ENCODE measurements at regions of chr12 and their contacts with region 1.

Region 1: DNA sequence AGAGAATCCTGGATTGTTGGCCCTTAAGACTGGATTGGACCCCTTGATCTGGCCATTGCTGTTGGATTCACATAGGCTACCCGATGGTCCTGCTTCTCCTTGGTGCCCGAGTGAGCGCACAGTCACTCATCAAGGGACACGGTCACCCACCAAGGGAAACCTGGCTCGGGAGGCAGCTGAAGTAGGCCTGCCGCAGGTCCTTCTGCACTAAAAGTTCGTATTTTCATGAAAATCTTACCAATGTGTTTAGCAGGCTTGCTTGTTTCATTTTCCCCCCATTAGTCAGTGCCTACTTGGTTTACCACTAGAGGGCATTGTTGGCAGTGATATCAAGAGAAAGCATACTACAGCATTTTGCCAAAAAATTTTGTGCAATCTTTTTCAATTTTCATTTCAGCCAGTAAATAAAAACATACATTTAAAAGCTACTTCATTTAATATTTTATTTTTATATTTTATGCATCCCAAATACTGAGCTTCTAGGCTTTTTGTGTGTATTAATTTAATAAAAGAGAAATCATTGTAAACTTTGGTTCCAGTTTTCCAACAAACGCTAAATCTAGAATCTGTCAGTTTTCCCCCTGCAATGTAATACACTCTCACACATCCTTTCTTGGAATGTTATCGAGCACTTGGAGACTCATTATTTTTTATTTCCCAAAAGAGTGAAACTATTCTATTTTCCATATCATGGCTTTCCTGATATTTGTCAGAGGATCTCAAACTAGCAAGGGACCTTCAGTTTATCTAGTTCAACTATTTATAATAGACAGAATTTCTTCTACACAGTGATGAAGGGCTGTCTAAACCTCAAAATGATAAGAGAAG is 116.7 kb downstream of the LMNTD1 start:
- DNase-seq: peak; percentile 64
- H3K4me3 ChIP-seq: peak overlapping the region in 1 of 2 experiments; percentile 48; a peak in 3 of 4 replicates
- H3K27ac ChIP-seq: peak overlapping the region; percentile 16 to 39; a peak in 2 of 4 replicates
- H3K4me1 ChIP-seq: peaks cover 19 to 25% of the 10 kb centered on the region in 2 experiments
- H3K27me3 ChIP-seq: no peaks in the 10 kb centered on the region
- CTCF ChIP-seq: peak; percentile 95
- EP300 ChIP-seq: no peak
- RAD21 ChIP-seq: peak; percentile 92

Region 2: GRCh38 chr12:25362646-25363045 is 73.8 kb before region 1 on chr12:
- CTCF ChIA-PET with region 1: no interaction called
- POLR2A ChIA-PET with region 1: no interaction called
- DNase-seq: no peak
- H3K4me3 ChIP-seq: no peak overlapping the region
- H3K27ac ChIP-seq: peak overlapping the region in 1 of 2 experiments; percentile 24; a peak in 1 of 4 replicates
- H3K4me1 ChIP-seq: peaks cover 0 to 11% of the 10 kb centered on the region in 2 experiments; a peak in 3 of 4 replicates
- H3K27me3 ChIP-seq: no peaks in the 10 kb centered on the region
- CTCF ChIP-seq: no peak
- EP300 ChIP-seq: no peak
- RAD21 ChIP-seq: no peak

Region 3: GRCh38 chr12:25458047-25458552 is 21.7 kb after region 1 on chr12:
- CTCF ChIA-PET with region 1: interaction called, 11 read pairs
- POLR2A ChIA-PET with region 1: no interaction called
- DNase-seq: peak; percentile 56
- H3K4me3 ChIP-seq: peak overlapping the region; percentile 1 to 9; a peak in 1 of 4 replicates
- H3K27ac ChIP-seq: peak overlapping the region; percentile 85 to 99
- H3K4me1 ChIP-seq: peaks cover 4 to 12% of the 10 kb centered on the region in 2 experiments
- H3K27me3 ChIP-seq: no peaks in the 10 kb centered on the region
- CTCF ChIP-seq: no peak
- EP300 ChIP-seq: peak; percentile 59 to 93
- RAD21 ChIP-seq: peak; percentile 35

Region 4: DNA sequence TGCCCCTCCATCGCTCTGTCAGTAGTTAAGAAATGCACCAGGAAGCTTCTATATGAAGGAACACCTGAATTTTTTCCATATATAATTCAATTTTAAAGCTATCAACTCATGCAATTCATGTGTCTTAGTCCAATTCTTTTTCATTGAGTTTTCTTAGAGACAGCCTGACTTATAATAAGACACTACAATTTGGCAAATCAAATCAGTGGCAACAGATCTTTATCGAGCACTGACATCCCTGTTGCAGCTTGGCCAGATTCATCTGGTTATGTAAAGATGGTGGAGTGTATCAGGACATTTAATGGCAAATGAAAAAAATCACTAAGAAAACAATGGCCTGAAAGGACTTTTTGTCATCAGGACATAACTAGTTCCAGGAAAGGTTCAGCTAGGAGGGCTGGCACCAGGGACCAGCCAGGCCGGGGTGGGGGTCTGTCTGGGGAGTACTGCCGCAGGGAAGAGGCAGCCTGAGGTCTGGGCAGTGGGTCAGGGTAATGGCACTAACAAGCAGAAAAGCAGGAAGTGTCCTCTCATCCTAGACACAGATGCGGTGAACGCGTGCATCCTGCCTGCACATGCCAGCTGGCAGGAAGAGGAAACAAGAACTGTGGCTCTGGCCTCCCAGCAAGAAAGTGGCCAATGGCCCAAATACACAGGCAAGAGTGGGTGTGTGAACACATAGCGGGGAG is 217.2 kb after region 1 on chr12:
- CTCF ChIA-PET with region 1: interaction called, 15 read pairs
- POLR2A ChIA-PET with region 1: no interaction called
- DNase-seq: peak; percentile 82
- H3K4me3 ChIP-seq: no peak overlapping the region
- H3K27ac ChIP-seq: peak overlapping the region; percentile 23 to 100; a peak in 3 of 4 replicates
- H3K4me1 ChIP-seq: peaks cover 3 to 39% of the 10 kb centered on the region in 2 experiments; a peak in 3 of 4 replicates
- H3K27me3 ChIP-seq: no peaks in the 10 kb centered on the region
- CTCF ChIP-seq: no peak
- EP300 ChIP-seq: peak in 1 of 2 experiments; percentile 88; a peak in 2 of 4 replicates
- RAD21 ChIP-seq: peak; percentile 41

Region 5: DNA sequence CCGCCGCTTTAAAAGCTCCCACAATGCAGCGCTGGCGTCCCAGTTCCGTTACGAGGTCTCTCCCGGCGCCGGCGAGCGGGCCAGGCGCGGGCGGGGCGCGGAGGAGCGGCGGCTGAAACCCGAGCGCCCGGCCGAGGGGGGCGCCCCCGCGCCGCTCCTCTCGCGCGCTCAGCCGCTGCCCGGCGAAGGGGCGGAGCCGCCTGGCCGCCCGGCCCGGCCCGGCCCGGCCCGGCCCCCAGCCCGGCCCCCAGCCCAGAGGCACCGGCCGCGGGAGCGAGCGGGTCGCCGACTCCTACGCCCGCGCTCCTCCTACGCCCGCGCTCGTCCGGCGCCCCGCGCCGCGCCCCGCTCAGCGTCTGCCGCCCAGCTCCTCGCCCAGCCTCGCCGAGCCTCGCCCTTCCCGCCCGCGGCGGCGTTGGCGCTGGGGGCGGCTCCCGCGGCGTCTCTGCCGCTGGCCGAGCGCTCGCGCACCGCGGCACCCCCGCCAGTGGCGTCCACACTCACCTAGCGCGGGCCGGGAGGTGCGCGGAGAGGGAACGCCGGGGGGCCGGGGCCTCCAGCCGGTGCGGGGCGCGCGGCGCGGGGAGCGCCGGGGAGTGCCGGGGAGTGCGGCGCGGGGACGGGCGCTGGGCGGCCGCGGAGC is 522.1 kb after region 1 on chr12 and contains the start of gene RASSF8:
- CTCF ChIA-PET with region 1: interaction called, 19 read pairs
- POLR2A ChIA-PET with region 1: no interaction called
- DNase-seq: peak; percentile 94
- H3K4me3 ChIP-seq: peak within 1 kb of the TSS; percentile 89 to 92
- H3K27ac ChIP-seq: peak within 1 kb of the TSS; percentile 95 to 99
- H3K4me1 ChIP-seq: peaks cover 0 to 24% of the 10 kb centered on the region in 2 experiments; a peak in 2 of 4 replicates
- H3K27me3 ChIP-seq: no peaks in the 10 kb centered on the region
- CTCF ChIP-seq: no peak
- EP300 ChIP-seq: no peak
- RAD21 ChIP-seq: 0 out of 2 replicates have a peak, but pooled peaks have one; percentile 16
- polyA plus RNA-seq, gene RASSF8: 15.3 and 17.9 TPM in 2 replicates

Region 6: DNA sequence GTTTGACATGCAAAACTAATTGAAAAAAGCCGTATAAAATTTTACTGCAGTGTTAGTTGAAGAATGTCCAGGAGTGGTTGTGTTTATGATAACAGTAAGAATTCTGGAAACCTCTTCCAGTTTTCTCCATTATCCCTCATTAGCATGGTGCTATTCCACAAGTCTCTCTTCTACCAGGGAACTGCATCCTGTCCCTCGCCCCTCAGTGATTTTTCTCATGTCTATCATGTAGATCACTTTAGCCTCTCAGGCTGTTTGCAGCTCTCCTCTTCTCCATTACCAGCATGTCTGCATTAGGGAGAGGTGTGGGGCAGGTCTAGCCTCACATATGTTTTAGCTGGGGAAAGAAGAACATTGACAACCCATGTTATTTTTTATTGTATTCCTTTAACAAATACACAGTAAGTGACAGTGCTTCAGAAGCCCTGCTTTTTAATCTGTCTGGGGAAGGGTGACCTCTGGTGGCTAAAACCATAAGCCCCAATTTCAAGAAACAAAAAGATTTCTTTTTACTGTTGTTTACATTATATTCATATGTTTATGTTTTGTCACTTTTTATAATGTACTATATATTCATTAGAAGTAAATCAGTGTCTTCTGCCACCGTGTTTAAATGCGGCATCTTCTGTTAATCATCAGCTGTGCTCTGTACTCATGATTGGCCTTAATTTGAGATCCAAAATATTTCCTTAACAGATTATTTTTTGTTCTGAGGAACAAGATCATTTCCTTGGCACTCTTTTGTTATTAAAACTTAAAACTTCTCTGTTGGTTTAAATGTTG is 592.7 kb after region 1 on chr12:
- CTCF ChIA-PET with region 1: interaction called, 24 read pairs
- POLR2A ChIA-PET with region 1: no interaction called
- DNase-seq: peak; percentile 52
- H3K4me3 ChIP-seq: no peak overlapping the region; a peak in 1 of 4 replicates
- H3K27ac ChIP-seq: peak overlapping the region; percentile 54 to 68
- H3K4me1 ChIP-seq: peaks cover 19 to 23% of the 10 kb centered on the region in 2 experiments; a peak in 3 of 4 replicates
- H3K27me3 ChIP-seq: no peaks in the 10 kb centered on the region
- CTCF ChIP-seq: peak; percentile 94
- EP300 ChIP-seq: no peak
- RAD21 ChIP-seq: peak; percentile 88

Region 7: GRCh38 chr12:26088993-26089392 is 652.6 kb after region 1 on chr12:
- CTCF ChIA-PET with region 1: interaction called, 21 read pairs
- POLR2A ChIA-PET with region 1: no interaction called
- DNase-seq: no peak
- H3K4me3 ChIP-seq: no peak overlapping the region
- H3K27ac ChIP-seq: no peak overlapping the region
- H3K4me1 ChIP-seq: no peaks in the 10 kb centered on the region; a peak in 3 of 4 replicates
- H3K27me3 ChIP-seq: no peaks in the 10 kb centered on the region
- CTCF ChIP-seq: no peak
- EP300 ChIP-seq: no peak
- RAD21 ChIP-seq: no peak

Measured in SK-N-SH (cell line).